Mammary epithelial cell (primary cell): ENCODE measurements at regions of chr19 and their contacts with region 1.

Region 1: DNA sequence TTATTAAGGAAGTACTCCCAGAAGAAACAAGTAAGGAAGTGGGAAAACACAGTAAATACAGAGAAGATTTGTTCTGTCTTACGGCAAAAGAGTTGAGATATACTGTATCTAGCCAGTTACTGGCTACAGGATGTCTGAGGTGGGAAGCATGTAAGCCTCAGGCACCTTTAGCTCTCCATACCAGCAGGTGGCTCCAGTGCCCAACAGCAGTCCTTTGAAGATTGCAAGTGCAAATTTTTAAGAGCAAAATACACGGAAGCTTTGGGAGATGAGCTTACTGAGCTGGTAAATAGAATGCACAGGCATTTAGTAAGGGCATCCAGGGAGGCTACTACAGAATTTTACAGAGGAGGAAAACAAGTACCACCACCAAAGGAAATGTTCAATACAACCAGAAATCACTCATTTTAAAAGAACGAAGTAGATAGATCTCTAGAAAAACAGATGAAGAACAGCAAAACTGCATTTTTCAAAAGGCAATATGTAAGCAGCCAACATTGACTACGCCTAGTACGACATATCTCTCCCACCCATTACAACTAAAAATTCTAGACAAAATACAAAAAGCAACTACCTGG is 57.9 kb upstream of the VSTM2B start:
- DNase-seq: peak; percentile 4
- H3K4me3 ChIP-seq: no peak overlapping the region
- H3K27ac ChIP-seq: no peak overlapping the region
- H3K4me1 ChIP-seq: no peaks in the 10 kb centered on the region
- H3K27me3 ChIP-seq: no peaks in the 10 kb centered on the region
- CTCF ChIP-seq: peak; percentile 7 to 29

Region 2: DNA sequence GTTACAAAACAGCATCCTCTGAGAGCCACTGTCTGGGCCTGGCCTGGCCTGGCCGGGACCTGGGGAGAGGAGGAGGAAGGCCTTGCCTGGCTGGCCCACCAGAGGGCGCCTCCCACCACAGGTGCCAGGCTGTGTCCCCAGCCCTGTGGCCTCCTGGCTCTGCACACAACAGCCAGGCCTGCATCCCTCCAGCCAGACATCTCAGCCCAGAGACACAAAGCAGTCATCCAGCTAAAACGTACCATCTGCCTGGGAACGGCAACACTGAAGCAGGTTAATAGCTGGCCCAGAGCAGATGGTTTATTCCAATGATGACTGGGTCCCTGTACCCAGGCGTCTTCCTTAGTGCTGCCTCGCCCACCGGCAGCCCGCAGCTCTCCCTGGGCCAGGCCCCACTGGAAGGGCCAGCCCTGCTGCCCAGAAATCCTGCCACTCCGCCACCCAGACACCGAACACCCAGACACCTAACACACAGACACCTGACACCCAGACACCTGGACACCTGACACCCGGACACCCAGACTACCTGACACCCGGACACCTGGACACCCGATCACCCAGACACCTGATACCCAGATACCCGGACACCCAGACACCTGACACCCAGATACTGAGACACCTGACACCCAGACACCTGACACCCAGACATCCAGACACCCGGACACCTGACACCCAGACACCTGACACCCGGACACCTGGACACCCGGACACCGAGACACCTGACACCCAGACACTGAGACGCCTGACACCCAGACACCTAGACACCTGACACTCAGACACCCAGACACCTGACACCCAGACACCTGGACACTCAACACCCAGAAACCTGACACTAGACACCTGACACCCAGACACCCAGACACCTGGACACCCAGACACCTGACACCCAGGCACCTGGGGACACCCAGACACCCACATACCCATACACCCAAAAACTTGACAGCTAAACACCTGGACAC is 227.0 kb after region 1 on chr19:
- CTCF ChIA-PET with region 1: no interaction called
- dilution Hi-C with region 1: no loop called
- in situ Hi-C with region 1: no loop called
- intact Hi-C with region 1: loop called (anchors 10 kb)
- DNase-seq: peak; percentile 26
- H3K4me3 ChIP-seq: no peak overlapping the region
- H3K27ac ChIP-seq: no peak overlapping the region
- H3K4me1 ChIP-seq: no peaks in the 10 kb centered on the region
- H3K27me3 ChIP-seq: no peaks in the 10 kb centered on the region
- CTCF ChIP-seq: peak; percentile 75 to 84